ENCODE measurements at regions of chr7 and their contacts with region 1.

Region 1: GRCh38 chr7:101138213-101138870 is 11.4 kb downstream of the SERPINE1 start:
- DNase-seq: peak; percentile 90
- ATAC-seq: peak; percentile 81
- H3K4me3 ChIP-seq: no peak overlapping the region; a peak in 1 of 6 replicates
- H3K27ac ChIP-seq: peak overlapping the region; percentile 27
- H3K4me1 ChIP-seq: peaks cover 26% of the 10 kb centered on the region
- H3K27me3 ChIP-seq: no peaks in the 10 kb centered on the region
- CTCF ChIP-seq: peak; percentile 71
- EP300 ChIP-seq: peak; percentile 42 to 57; a peak in 1 of 4 replicates
- POLR2A ChIP-seq: peak in 1 of 2 experiments; percentile 72; a peak in 2 of 4 replicates
- RAD21 ChIP-seq: peak; percentile 51; the same call in 1 of the 2 replicates

Region 2: DNA sequence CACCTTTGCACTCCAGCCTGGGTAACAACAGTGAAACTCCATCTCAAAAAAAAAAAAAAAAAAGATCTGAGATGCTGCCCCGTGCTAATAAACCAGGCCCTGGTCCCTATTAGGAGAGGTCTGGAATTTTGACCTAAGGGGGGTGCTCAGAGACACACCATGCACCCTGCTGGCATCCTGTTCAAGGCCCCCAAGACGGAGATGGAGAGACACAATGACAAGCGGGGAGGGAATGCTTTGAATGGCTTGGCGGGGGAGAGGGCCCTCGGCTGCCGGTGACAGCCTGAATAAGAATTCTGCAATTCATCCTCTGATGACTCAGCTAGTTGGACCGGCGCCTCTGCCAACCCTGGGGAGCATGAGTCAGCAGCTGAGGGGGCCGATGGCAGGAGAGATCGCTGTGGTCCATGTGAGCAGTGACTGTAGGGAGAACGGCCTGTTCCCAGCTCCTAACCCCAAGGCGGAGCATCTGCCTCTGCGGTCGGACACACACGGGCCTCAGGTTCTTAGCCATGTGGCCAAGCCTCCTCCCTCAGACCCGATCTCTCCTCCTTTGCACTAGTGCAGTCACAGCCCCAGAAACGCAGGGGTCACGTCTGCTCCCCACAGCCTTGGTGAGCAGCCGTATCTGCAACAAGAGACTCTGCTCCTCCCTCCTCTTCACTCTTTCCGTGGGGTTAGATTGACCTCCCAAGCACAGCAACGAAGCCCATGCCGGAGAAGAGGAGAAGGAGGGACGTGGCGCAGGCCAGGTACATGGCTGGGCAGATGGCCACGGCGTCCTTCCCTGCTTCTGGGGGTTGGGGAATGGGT is 38.2 kb before region 1 on chr7:
- CTCF ChIA-PET with region 1: interaction called, 40 read pairs
- POLR2A ChIA-PET with region 1: interaction called, 3 read pairs
- in situ Hi-C with region 1: loop called (anchors 5 kb)
- intact Hi-C with region 1: loop called (anchors 1 kb)
- DNase-seq: peak; percentile 88
- ATAC-seq: peak; percentile 81
- H3K4me3 ChIP-seq: peak overlapping the region in 1 of 3 experiments; percentile 52; a peak in 2 of 6 replicates
- H3K27ac ChIP-seq: peak overlapping the region; percentile 61
- H3K4me1 ChIP-seq: peaks cover 79% of the 10 kb centered on the region
- H3K27me3 ChIP-seq: no peaks in the 10 kb centered on the region
- CTCF ChIP-seq: no peak; the same call in 1 of the 2 replicates
- EP300 ChIP-seq: peak; percentile 34 to 76; a peak in 1 of 4 replicates
- POLR2A ChIP-seq: peak in 1 of 2 experiments; percentile 34; a peak in 1 of 4 replicates
- RAD21 ChIP-seq: peak; percentile 36; the same call in 1 of the 2 replicates

Region 3: DNA sequence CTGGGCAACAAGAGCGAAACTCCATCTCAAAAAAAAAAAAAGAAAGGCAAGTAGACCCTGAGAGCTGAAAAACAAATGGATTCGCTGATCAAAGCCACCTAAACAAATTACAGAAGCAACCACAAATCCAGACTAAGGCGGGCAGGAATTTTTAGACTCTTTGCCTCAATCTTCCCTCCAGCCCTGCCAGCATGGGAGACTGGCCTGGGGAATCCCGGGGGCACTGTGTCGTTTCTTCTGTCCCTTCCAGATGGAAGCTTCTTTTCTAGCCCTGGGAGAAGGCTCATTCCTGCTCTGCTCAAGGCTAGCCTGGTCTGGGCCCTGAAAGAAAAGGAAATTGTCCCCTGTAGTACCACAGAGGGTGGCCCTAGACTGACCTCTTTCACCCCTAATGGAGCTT is 27.1 kb before region 1 on chr7:
- CTCF ChIA-PET with region 1: no interaction called
- POLR2A ChIA-PET with region 1: no interaction called
- in situ Hi-C with region 1: no loop called
- intact Hi-C with region 1: no loop called
- DNase-seq: no peak
- ATAC-seq: no peak
- H3K4me3 ChIP-seq: no peak overlapping the region
- H3K27ac ChIP-seq: no peak overlapping the region
- H3K4me1 ChIP-seq: peaks cover 70% of the 10 kb centered on the region
- H3K27me3 ChIP-seq: 0 out of 5 replicates have a peak, but pooled peaks cover 0 to 3% of the 10 kb centered on the region in 2 experiments
- CTCF ChIP-seq: no peak
- EP300 ChIP-seq: no peak
- POLR2A ChIP-seq: no peak
- RAD21 ChIP-seq: no peak

Region 4: GRCh38 chr7:101153969-101154692 is 15.8 kb after region 1 on chr7 and contains the start of gene AP1S1:
- CTCF ChIA-PET with region 1: no interaction called
- POLR2A ChIA-PET with region 1: no interaction called
- in situ Hi-C with region 1: no loop called
- intact Hi-C with region 1: no loop called
- DNase-seq: peak; percentile 96
- ATAC-seq: peak; percentile 94
- H3K4me3 ChIP-seq: peak within 1 kb of the TSS; percentile 83 to 95 (median 85)
- H3K27ac ChIP-seq: peak within 1 kb of the TSS; percentile 38
- H3K4me1 ChIP-seq: peaks cover 12% of the 10 kb centered on the region
- H3K27me3 ChIP-seq: no peaks in the 10 kb centered on the region; a peak in 1 of 5 replicates
- CTCF ChIP-seq: 0 out of 2 replicates have a peak, but pooled peaks have one; percentile 4
- EP300 ChIP-seq: no peak
- POLR2A ChIP-seq: peak in 1 of 2 experiments; percentile 52; a peak in 2 of 4 replicates
- RAD21 ChIP-seq: no peak
- total RNA-seq, gene AP1S1: 57.5 and 77.9 TPM in 2 replicates

Region 5: GRCh38 chr7:101169838-101170551 is 31.7 kb after region 1 on chr7:
- CTCF ChIA-PET with region 1: interaction called, 14 read pairs
- POLR2A ChIA-PET with region 1: interaction called, 3 read pairs
- in situ Hi-C with region 1: no loop called
- intact Hi-C with region 1: no loop called
- DNase-seq: peak; percentile 31
- ATAC-seq: peak; percentile 59
- H3K4me3 ChIP-seq: no peak overlapping the region
- H3K27ac ChIP-seq: no peak overlapping the region
- H3K4me1 ChIP-seq: peaks cover 52% of the 10 kb centered on the region
- H3K27me3 ChIP-seq: peaks cover 15 to 78% of the 10 kb centered on the region in 2 experiments
- CTCF ChIP-seq: peak; percentile 94
- EP300 ChIP-seq: no peak
- POLR2A ChIP-seq: no peak
- RAD21 ChIP-seq: peak; percentile 73

Region 6: DNA sequence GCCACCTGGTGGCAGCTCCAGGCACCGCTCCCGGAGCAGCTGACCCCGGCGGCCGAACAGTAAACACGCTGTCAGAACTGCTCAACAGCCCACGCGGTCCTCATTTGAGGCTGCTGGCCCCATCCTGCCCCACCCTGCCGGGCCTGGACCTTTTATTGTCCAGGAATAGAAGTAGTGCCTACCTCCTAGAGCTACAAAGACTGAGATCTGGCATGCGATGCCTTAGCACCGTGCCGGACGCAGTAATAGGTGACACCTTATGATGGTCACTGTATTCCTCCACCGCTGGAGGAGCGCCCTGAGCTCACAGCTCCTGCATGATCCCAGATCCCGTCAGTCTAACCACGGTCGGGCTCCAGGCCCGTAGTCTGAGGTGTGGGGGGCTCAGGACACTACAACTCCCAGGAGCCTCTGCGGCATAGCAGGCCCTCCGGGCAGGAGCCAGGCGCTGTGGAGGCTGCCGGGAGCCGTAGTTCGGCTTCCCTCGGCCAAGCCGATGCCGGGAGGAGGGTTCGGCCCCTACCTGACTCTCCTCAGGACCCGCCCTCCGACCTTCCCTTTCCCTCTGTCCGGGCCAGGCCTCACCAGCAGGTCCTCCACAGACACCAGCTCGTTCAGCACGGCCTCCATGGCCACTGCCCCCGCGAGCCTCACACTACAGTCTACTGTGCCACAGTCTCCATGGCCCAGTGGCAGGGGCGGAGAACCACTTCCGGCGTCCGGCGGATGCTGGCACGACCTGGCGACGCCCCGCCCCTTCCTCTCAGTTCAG is 106.2 kb after region 1 on chr7 and contains the start of gene FIS1:
- CTCF ChIA-PET with region 1: no interaction called
- POLR2A ChIA-PET with region 1: interaction called, 3 read pairs
- in situ Hi-C with region 1: no loop called
- intact Hi-C with region 1: loop called (anchors 2 kb)
- DNase-seq: peak; percentile 81
- ATAC-seq: peak; percentile 96
- H3K4me3 ChIP-seq: peak within 1 kb of the TSS; percentile 79 to 90 (median 82)
- H3K27ac ChIP-seq: peak within 1 kb of the TSS; percentile 76
- H3K4me1 ChIP-seq: peaks cover 32% of the 10 kb centered on the region
- H3K27me3 ChIP-seq: no peaks in the 10 kb centered on the region
- CTCF ChIP-seq: peak; percentile 96
- EP300 ChIP-seq: no peak
- POLR2A ChIP-seq: peak; percentile 55 to 81; a peak in 3 of 4 replicates
- RAD21 ChIP-seq: peak; percentile 93
- total RNA-seq, gene FIS1: 97.5 and 122 TPM in 2 replicates

Region 7: GRCh38 chr7:101265622-101266516 is 127.5 kb after region 1 on chr7:
- CTCF ChIA-PET with region 1: no interaction called
- POLR2A ChIA-PET with region 1: no interaction called
- in situ Hi-C with region 1: no loop called
- intact Hi-C with region 1: no loop called
- DNase-seq: no peak
- ATAC-seq: no peak
- H3K4me3 ChIP-seq: no peak overlapping the region
- H3K27ac ChIP-seq: no peak overlapping the region
- H3K4me1 ChIP-seq: no peaks in the 10 kb centered on the region
- H3K27me3 ChIP-seq: peaks cover 0 to 4% of the 10 kb centered on the region in 2 experiments; a peak in 1 of 5 replicates
- CTCF ChIP-seq: no peak
- EP300 ChIP-seq: no peak
- POLR2A ChIP-seq: no peak
- RAD21 ChIP-seq: no peak

Region 8: GRCh38 chr7:101294039-101294831 is 155.9 kb after region 1 on chr7:
- CTCF ChIA-PET with region 1: no interaction called
- POLR2A ChIA-PET with region 1: no interaction called
- in situ Hi-C with region 1: loop called (anchors 5 kb)
- intact Hi-C with region 1: no loop called
- DNase-seq: no peak
- ATAC-seq: no peak
- H3K4me3 ChIP-seq: no peak overlapping the region
- H3K27ac ChIP-seq: no peak overlapping the region
- H3K4me1 ChIP-seq: peaks cover 15% of the 10 kb centered on the region
- H3K27me3 ChIP-seq: peaks cover 0 to 46% of the 10 kb centered on the region in 2 experiments; a peak in 2 of 5 replicates
- CTCF ChIP-seq: no peak
- EP300 ChIP-seq: no peak
- POLR2A ChIP-seq: no peak
- RAD21 ChIP-seq: no peak

Region 9: GRCh38 chr7:102155821-102156441 is 1017.6 kb after region 1 on chr7:
- CTCF ChIA-PET with region 1: no interaction called
- POLR2A ChIA-PET with region 1: no interaction called
- in situ Hi-C with region 1: no loop called
- intact Hi-C with region 1: no loop called
- DNase-seq: peak; percentile 78
- ATAC-seq: peak; percentile 55
- H3K4me3 ChIP-seq: peak overlapping the region in 2 of 3 experiments; percentile 39 to 40; a peak in 2 of 6 replicates
- H3K27ac ChIP-seq: peak overlapping the region; percentile 100
- H3K4me1 ChIP-seq: peaks cover 72% of the 10 kb centered on the region
- H3K27me3 ChIP-seq: no peaks in the 10 kb centered on the region
- CTCF ChIP-seq: no peak
- EP300 ChIP-seq: 0 out of 4 replicates have a peak, but pooled peaks of 1 of the 2 experiments have one; percentile 34
- POLR2A ChIP-seq: no peak
- RAD21 ChIP-seq: no peak

Measured in HepG2 (cell line).